MCF 10A (cell line): ENCODE measurements at regions of chrX and their contacts with region 1.

Region 1: GRCh38 chrX:121308276-121308805 is 260.9 kb downstream of the GLUD2 start:
- DNase-seq: peak; percentile 50
- H3K4me3 Mint-ChIP-seq: no peak overlapping the region
- H3K27ac Mint-ChIP-seq: no peak overlapping the region
- H3K4me1 Mint-ChIP-seq: no peaks in the 10 kb centered on the region
- H3K27me3 Mint-ChIP-seq: no peaks in the 10 kb centered on the region
- CTCF ChIP-seq: peak; percentile 38

Region 2: DNA sequence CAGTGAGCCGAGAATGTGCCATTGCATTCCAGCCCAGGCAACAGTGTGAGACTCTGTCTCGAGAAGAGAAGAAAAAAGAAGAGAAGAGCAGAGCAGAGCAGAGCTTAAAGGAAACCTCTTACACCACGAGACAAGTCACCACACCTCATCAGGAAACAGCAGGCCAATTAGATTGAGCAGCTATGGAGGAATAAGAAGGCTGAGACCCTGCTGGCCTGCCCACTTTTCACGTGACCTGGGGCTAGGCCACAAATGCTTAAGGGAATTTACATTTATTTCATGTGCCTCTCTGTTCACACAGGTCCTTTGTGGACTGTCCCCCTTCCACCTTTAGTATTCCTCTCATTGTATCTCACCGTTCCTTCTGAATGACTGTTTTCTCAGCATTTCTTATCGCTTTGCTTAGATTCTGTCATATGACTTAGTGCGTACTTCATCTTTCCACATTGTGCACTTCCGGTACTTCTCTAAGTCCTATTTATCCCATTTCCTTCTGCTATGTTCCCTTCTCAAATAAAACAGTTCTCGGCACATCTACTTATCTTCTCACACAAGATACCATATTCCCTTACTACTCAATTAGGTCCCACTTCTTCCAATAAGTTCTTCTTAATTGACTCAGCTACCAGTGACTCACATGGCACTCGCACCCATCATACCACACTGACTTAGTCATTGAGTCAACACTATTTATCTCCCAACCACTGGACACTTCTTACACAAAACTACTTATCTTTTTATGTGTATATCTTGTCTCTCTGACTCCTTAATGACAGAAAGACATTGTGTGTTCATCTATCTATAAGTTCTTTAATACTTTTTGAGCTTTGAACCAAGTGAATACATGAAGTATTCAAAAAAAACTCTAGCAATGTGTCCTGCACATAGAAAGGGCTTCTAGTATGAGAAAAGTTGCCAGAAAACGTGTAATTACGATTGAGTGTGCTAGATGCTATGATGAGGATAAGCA is 758.6 kb before region 1 on chrX:
- CTCF ChIA-PET with region 1: no interaction called
- POLR2A ChIA-PET with region 1: no interaction called
- intact Hi-C with region 1: no loop called
- DNase-seq: peak; percentile 90
- H3K4me3 Mint-ChIP-seq: peak overlapping the region; percentile 47
- H3K27ac Mint-ChIP-seq: peak overlapping the region; percentile 61
- H3K4me1 Mint-ChIP-seq: peaks cover 12% of the 10 kb centered on the region
- H3K27me3 Mint-ChIP-seq: peaks cover 9% of the 10 kb centered on the region
- CTCF ChIP-seq: no peak

Region 3: DNA sequence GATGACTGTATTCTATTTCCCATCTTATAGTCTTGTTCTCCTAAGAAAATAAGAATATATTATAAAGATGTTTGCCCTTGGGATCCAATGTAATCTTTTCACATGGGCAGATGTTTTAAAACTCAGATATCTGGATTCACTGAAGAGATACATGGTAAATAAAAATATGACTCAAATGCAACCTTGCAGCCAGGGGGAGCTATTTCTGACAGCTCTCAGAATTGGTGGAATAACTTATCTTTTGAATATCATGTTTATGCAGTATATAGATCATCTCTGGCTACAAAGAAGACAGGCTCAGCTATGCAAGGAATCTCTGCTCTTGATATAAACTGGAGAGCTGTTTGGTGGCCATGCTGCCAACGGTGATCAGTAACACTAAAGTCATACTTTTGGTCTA is 13.8 kb after region 1 on chrX:
- CTCF ChIA-PET with region 1: interaction called, 13 read pairs
- POLR2A ChIA-PET with region 1: interaction called, 3 read pairs
- intact Hi-C with region 1: no loop called
- DNase-seq: peak; percentile 27
- H3K4me3 Mint-ChIP-seq: no peak overlapping the region
- H3K27ac Mint-ChIP-seq: no peak overlapping the region
- H3K4me1 Mint-ChIP-seq: no peaks in the 10 kb centered on the region
- H3K27me3 Mint-ChIP-seq: no peaks in the 10 kb centered on the region
- CTCF ChIP-seq: peak; percentile 22